Adrenal gland (tissue), 19 donors: ENCODE measurements at regions of chr19 and their contacts with region 1.

Region 1: GRCh38 chr19:29263305-29264135 is 50.6 kb upstream of the UQCRFS1 start:
- DNase-seq: peak in 6 of 7 donors; percentile 35 to 70 (median 50)
- H3K4me3 ChIP-seq: no peak overlapping the region
- H3K27ac ChIP-seq: no peak overlapping the region
- H3K4me1 ChIP-seq: no peaks in the 10 kb centered on the region
- H3K27me3 ChIP-seq: no peaks in the 10 kb centered on the region
- CTCF ChIP-seq: peak; percentile 28 to 72 (median 56)
- POLR2A ChIP-seq: no peak

Region 2: DNA sequence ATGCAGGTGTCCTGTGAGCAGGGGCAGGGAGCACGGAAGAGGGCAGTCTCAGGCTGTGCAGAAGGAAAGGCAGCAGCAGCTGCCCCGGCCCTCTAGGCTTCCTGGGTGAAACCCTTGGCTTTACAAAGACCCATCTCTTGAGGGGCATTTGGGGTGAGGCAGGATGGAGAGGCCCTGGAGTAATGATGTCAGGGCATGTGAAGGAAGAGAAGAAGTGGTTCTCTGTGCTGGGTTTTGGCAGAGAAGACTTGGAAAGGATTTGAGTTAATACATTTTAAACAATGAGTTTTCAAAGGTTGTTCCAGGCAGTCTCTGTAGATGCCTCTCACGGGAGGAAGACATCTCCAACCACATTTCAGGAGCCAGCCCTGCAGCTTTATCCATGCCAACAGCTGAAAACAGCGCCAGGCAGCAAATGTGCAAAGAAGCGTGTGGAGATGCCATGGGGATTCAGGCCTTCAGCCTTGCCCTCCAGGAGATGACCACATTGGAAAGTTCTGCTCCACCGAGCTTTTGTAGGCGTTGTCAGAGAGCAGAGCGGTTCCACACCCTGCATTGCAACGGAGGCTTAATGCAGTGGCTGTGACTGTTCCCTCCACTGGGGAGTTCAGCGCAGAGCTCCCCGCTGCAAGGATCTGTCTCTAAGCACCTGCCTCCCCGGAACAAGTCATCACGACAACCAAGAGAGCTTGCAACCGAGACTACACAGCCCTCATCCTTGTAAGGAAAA is 373.4 kb before region 1 on chr19:
- intact Hi-C with region 1: loop called in 1 of 2 experiments (anchors 10 kb)
- DNase-seq: no peak
- H3K4me3 ChIP-seq: no peak overlapping the region
- H3K27ac ChIP-seq: no peak overlapping the region
- H3K4me1 ChIP-seq: no peaks in the 10 kb centered on the region
- H3K27me3 ChIP-seq: peaks cover 5% of the 10 kb centered on the region
- CTCF ChIP-seq: no peak
- POLR2A ChIP-seq: no peak

Region 3: DNA sequence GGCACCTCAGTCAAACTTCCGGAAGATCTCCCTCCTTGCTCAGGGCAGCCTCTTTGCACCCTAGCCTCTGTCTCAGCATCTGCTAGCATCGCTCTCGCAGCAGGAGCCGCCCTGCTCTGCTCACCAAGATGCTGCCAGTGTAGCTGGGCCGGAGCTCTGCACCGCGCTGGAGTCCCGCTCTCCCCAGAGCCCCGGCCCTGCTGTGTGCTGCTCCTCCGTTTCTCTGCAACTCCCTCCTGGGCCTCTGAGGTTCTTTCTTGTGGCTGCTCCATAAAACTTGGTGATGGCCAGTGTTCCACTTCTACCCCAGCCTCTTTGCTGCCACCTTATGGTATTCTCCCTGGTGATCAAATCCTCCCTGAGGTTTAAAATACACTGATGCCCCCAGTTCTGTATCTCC is 248.6 kb before region 1 on chr19:
- intact Hi-C with region 1: loop called in 1 of 2 experiments (anchors 10 kb)
- DNase-seq: no peak
- H3K4me3 ChIP-seq: no peak overlapping the region
- H3K27ac ChIP-seq: no peak overlapping the region
- H3K4me1 ChIP-seq: no peaks in the 10 kb centered on the region
- H3K27me3 ChIP-seq: peaks cover 12% of the 10 kb centered on the region
- CTCF ChIP-seq: no peak
- POLR2A ChIP-seq: no peak

Region 4: GRCh38 chr19:29429021-29429420 is 165.5 kb after region 1 on chr19:
- intact Hi-C with region 1: no loop called
- DNase-seq: no peak
- H3K4me3 ChIP-seq: no peak overlapping the region
- H3K27ac ChIP-seq: no peak overlapping the region
- H3K4me1 ChIP-seq: no peaks in the 10 kb centered on the region
- H3K27me3 ChIP-seq: no peaks in the 10 kb centered on the region
- CTCF ChIP-seq: no peak
- POLR2A ChIP-seq: no peak